Heart left ventricle (tissue), 16 donors: ENCODE measurements at regions of chr1 and their contacts with region 1.

Region 1: GRCh38 chr1:89804642-89805237 is 16.1 kb upstream of the LRRC8D start:
- DNase-seq: peak; percentile 77 to 88 (median 84)
- ATAC-seq: peak; percentile 82 to 94 (median 92)
- H3K4me3 ChIP-seq: no peak overlapping the region
- H3K27ac ChIP-seq: no peak overlapping the region
- H3K4me1 ChIP-seq: peaks cover 0 to 8% (median 0%) of the 10 kb centered on the region in 12 donors
- H3K27me3 ChIP-seq: no peaks in the 10 kb centered on the region
- CTCF ChIP-seq: peak; percentile 89 to 97 (median 92)
- POLR2A ChIP-seq: no peak

Region 2: DNA sequence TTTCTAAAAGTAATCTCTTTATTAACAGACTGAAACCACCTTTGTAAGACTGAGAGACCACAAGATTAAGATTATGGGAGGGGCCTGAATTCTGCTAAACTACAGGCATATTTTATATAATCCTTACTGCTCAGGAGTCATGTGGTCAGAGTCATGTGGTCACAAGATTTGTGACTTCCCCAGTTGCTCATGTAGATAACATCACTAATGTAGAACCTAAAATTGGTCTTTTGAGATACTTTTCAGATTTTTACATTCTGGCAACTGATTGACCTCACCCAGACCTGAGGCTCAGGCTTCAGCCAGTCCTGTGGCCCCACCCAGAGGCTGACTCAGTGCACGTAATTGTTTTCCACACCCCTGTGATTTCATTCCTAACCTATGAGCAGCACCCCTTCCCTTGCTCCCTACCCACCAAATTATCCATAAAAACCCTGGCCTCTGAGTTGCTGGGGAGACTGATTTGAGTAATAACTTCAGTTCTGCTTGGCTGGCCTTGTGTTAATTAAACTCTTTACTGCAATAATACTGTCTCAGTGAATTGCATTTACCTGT is 148.4 kb after region 1 on chr1:
- intact Hi-C with region 1: loop called in 1 of 10 experiments (anchors 10 kb)
- DNase-seq: peak in 3 of 5 donors; percentile 23 to 39 (median 37)
- ATAC-seq: peak in 3 of 4 donors; percentile 69 to 80 (median 79)
- H3K4me3 ChIP-seq: no peak overlapping the region
- H3K27ac ChIP-seq: no peak overlapping the region
- H3K4me1 ChIP-seq: peaks cover 0 to 16% (median 0%) of the 10 kb centered on the region in 12 donors
- H3K27me3 ChIP-seq: no peaks in the 10 kb centered on the region
- CTCF ChIP-seq: peak in 7 of 12 donors; percentile 9 to 38 (median 25)
- POLR2A ChIP-seq: no peak